Mammary epithelial cell (primary cell): ENCODE measurements at regions of chr7 and their contacts with region 1.

Region 1: GRCh38 chr7:156892821-156893706 is at the start of gene LMBR1:
- DNase-seq: peak; percentile 90
- H3K4me3 ChIP-seq: peak within 1 kb of the TSS; percentile 79 to 90 (median 90)
- H3K27ac ChIP-seq: peak within 1 kb of the TSS; percentile 85
- H3K4me1 ChIP-seq: peaks cover 13% of the 10 kb centered on the region
- H3K27me3 ChIP-seq: peaks cover 2% of the 10 kb centered on the region
- CTCF ChIP-seq: peak; percentile 58 to 65
- total RNA-seq, gene LMBR1: 63.7 to 65.6 TPM

Region 2: GRCh38 chr7:156845379-156846101 is 47.5 kb before region 1 on chr7:
- CTCF ChIA-PET with region 1: no interaction called
- dilution Hi-C with region 1: no loop called
- in situ Hi-C with region 1: no loop called
- intact Hi-C with region 1: loop called (anchors 5 kb)
- DNase-seq: no peak
- H3K4me3 ChIP-seq: no peak overlapping the region
- H3K27ac ChIP-seq: no peak overlapping the region
- H3K4me1 ChIP-seq: no peaks in the 10 kb centered on the region
- H3K27me3 ChIP-seq: no peaks in the 10 kb centered on the region
- CTCF ChIP-seq: no peak